Spleen (tissue), 13 donors: ENCODE measurements at regions of chr9 and their contacts with region 1.

Region 1: DNA sequence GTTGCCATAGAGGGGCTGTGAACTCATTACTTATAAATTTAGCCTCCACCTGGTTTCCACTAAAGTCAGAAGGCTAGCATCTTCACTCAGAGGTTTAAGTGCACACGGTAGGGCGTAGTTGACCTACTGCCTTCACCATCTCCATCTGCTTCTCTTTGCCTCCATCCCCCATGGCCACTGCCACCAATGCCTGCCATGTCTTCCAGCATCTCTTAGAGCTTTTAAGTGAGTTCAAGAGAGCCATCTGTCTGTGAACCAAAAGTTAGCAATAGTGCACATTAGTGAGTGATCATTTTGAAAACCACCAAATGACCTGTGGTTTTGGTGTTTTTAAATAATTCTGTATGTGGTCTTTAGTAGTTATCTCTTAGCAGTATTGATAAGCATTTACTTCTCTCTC is 102.0 kb downstream of the DMRTA1 start:
- DNase-seq: no peak
- H3K4me3 ChIP-seq: no peak overlapping the region
- H3K27ac ChIP-seq: no peak overlapping the region
- H3K4me1 ChIP-seq: no peaks in the 10 kb centered on the region
- H3K27me3 ChIP-seq: no peaks in the 10 kb centered on the region
- CTCF ChIP-seq: no peak
- POLR2A ChIP-seq: no peak

Region 2: DNA sequence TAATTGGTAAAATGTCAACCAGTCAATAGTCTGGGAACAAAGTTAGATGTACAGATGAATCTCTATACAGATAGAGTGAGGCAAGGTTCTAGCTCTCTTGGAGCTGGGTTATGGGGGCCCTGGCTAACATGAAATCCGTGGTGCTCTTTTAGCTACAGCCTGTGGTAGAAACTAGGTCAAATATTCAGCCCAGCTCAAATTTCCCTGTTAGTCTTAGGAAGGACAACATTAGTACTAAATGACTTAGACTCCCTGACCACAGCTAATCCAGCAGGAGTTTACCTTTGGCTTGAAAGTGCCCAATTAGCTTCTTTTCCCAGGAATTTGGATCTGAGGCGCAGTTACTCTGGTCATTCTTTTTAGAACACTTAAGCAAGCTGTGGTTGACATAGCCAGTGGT is 68.5 kb after region 1 on chr9:
- intact Hi-C with region 1: loop called (anchors 10 kb)
- DNase-seq: no peak
- H3K4me3 ChIP-seq: no peak overlapping the region
- H3K27ac ChIP-seq: no peak overlapping the region
- H3K4me1 ChIP-seq: no peaks in the 10 kb centered on the region
- H3K27me3 ChIP-seq: no peaks in the 10 kb centered on the region
- CTCF ChIP-seq: no peak
- POLR2A ChIP-seq: no peak

Region 3: DNA sequence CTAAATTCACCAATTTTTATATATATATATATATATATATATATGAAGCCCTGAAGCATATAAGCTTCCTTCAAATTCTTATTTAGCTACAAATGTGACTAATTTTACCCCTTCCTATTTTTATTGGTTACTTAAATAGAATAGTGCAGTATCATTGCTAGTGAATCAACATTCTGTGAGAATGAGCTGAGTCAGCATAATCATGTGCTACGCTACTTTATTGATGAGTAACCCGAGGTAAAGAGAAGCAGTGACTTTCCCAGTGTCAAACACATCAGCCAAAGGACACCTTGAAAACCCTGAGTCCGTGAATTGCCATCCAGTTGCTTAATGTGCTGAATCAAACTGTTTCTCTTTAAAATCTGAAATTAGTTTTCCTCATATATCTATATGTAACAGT is 444.2 kb after region 1 on chr9:
- intact Hi-C with region 1: no loop called
- DNase-seq: no peak
- H3K4me3 ChIP-seq: no peak overlapping the region
- H3K27ac ChIP-seq: no peak overlapping the region
- H3K4me1 ChIP-seq: no peaks in the 10 kb centered on the region
- H3K27me3 ChIP-seq: no peaks in the 10 kb centered on the region
- CTCF ChIP-seq: no peak
- POLR2A ChIP-seq: no peak

Region 4: GRCh38 chr9:23887781-23888180 is 1339.2 kb after region 1 on chr9:
- intact Hi-C with region 1: no loop called
- DNase-seq: no peak
- H3K4me3 ChIP-seq: no peak overlapping the region
- H3K27ac ChIP-seq: no peak overlapping the region
- H3K4me1 ChIP-seq: no peaks in the 10 kb centered on the region
- H3K27me3 ChIP-seq: no peaks in the 10 kb centered on the region
- CTCF ChIP-seq: no peak
- POLR2A ChIP-seq: no peak